ENCODE measurements at regions of chr5 and their contacts with region 1.

Region 1: DNA sequence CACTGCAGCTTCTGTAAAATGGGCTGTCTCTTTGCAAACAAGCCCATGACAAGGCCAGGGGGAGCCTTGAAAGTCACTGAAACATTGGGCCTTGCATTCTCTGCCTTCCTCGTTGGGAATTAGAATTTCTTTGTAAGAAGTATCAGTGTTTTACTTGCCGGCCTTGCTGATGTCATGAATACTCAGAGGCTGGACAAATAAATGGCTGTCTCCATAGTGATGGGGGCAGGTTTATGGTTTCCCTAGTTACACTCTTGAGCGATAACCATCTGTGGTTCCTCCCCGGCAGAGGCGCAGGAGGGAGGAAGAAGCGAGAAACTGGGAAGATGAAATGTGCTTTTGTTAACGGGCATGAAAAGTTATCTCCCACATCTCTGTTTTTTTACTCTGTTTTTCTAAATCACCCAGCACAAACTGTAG is 272.7 kb upstream of the PANK3 start:
- DNase-seq: no peak
- ATAC-seq: no peak
- H3K4me3 ChIP-seq: no peak overlapping the region
- H3K27ac ChIP-seq: no peak overlapping the region
- H3K4me1 ChIP-seq: no peaks in the 10 kb centered on the region
- H3K27me3 ChIP-seq: peaks cover 86% of the 10 kb centered on the region
- CTCF ChIP-seq: no peak
- POLR2A ChIP-seq: no peak
- RAD21 ChIP-seq: no peak

Region 2: GRCh38 chr5:168863021-168863420 is 11.1 kb after region 1 on chr5:
- CTCF ChIA-PET with region 1: no interaction called
- POLR2A ChIA-PET with region 1: no interaction called
- RAD21 ChIA-PET with region 1: no interaction called
- intact Hi-C with region 1: no loop called
- DNase-seq: no peak
- ATAC-seq: no peak
- H3K4me3 ChIP-seq: no peak overlapping the region
- H3K27ac ChIP-seq: no peak overlapping the region
- H3K4me1 ChIP-seq: no peaks in the 10 kb centered on the region
- H3K27me3 ChIP-seq: peaks cover 59% of the 10 kb centered on the region
- CTCF ChIP-seq: no peak
- POLR2A ChIP-seq: no peak
- RAD21 ChIP-seq: no peak

Region 3: GRCh38 chr5:168874713-168875380 is 22.9 kb after region 1 on chr5:
- CTCF ChIA-PET with region 1: no interaction called
- POLR2A ChIA-PET with region 1: no interaction called
- RAD21 ChIA-PET with region 1: no interaction called
- intact Hi-C with region 1: loop called (anchors 1 kb)
- DNase-seq: peak; percentile 16
- ATAC-seq: peak; percentile 88
- H3K4me3 ChIP-seq: no peak overlapping the region
- H3K27ac ChIP-seq: no peak overlapping the region
- H3K4me1 ChIP-seq: no peaks in the 10 kb centered on the region
- H3K27me3 ChIP-seq: peaks cover 81% of the 10 kb centered on the region
- CTCF ChIP-seq: peak; percentile 25 to 55 (median 51); a peak in 4 of 6 replicates
- POLR2A ChIP-seq: no peak
- RAD21 ChIP-seq: peak; percentile 35; the same call in 1 of the 2 replicates

Measured in HCT116 (cell line).